AG04449 (cell line): ENCODE measurements at regions of chr18 and their contacts with region 1.

Region 1: DNA sequence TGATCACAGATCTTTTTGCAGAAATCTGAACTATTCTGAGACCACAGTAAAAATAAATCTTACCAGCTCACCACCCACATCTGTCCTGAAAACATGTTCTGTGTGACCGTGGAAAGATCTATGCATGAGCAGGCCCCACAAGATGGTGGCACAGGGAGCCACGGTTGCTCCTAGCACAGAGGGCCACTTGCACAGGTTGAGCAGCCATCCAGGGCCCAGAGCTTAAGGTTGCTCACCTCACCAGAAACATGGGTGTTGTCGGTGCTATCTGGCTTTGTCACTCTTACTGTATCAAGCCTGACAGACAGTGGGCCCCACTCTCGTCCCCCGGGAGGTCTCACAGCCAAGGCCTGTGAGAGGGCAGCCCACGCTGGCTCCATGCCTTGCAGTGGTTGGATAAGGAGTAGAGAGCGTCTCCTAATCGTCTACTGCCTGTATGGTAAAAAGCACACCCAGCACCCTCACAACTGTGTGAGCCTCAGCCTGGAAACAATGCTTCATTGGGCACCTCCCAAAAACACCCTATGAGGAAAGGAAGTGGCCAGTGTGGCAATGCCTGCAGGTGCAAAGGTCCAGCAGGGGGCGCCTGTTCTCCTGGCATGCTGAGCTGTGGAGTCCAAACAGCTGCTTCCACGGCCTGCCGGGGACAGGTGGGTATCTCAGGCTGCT is 19.6 kb downstream of the TUBB6 start:
- DNase-seq: peak; percentile 7
- H3K4me3 ChIP-seq: no peak overlapping the region
- CTCF ChIP-seq: peak; percentile 89

Region 2: DNA sequence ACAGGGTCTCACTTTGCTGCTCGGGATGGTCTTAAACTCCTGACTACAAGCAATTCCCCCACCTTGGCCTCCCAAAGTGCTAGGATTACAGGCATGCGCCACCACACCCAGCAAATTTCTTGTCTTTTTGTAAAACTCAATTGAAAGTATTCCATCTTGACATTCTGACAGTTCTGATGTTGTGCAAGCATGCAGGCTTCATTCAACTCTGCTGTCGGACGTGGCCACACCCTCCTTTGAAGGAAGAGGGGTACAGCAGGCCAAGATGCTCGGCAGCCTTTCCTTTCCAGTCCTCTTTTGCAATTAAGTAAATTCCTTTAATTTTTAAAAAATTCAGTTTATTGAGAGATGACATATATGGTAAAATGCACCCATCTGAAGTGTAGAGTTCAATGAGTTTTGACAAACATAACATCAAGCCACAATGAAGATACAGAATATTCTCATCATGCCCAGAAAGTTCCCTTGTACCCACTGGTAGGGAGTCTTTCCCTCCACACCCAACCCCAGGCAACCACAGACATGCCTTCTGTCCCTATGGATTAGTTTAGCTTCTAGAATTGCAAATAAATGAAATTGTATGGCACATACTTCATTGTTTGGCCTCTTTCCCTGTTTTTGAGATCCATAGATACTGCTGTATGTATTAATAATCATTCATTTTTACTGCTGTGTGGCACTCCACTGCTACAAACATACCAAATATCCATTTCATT is 13.5 kb after region 1 on chr18:
- CTCF ChIA-PET with region 1: interaction called, 17 read pairs
- POLR2A ChIA-PET with region 1: interaction called, 5 read pairs
- DNase-seq: no peak
- H3K4me3 ChIP-seq: no peak overlapping the region
- CTCF ChIP-seq: no peak

Region 3: GRCh38 chr18:12347895-12348294 is 20.3 kb after region 1 on chr18:
- CTCF ChIA-PET with region 1: interaction called, 18 read pairs
- POLR2A ChIA-PET with region 1: interaction called, 3 read pairs
- DNase-seq: no peak
- H3K4me3 ChIP-seq: no peak overlapping the region
- CTCF ChIP-seq: no peak

Region 4: GRCh38 chr18:13318731-13319501 is 991.3 kb after region 1 on chr18:
- CTCF ChIA-PET with region 1: no interaction called
- POLR2A ChIA-PET with region 1: no interaction called
- DNase-seq: no peak
- H3K4me3 ChIP-seq: no peak overlapping the region
- CTCF ChIP-seq: no peak